ENCODE measurements at regions of chr12 and their contacts with region 1.

Region 1: GRCh38 chr12:67268896-67269631 is at the start of gene CAND1:
- DNase-seq: peak; percentile 99
- H3K4me3 ChIP-seq: peak within 1 kb of the TSS; percentile 65 to 98 (median 90)
- H3K27ac ChIP-seq: peak within 1 kb of the TSS; percentile 82
- H3K4me1 ChIP-seq: peaks cover 23% of the 10 kb centered on the region
- H3K27me3 ChIP-seq: no peaks in the 10 kb centered on the region
- CTCF ChIP-seq: no peak
- POLR2A ChIP-seq: peak; percentile 41
- total RNA-seq, gene CAND1: 124 and 128 TPM in 2 replicates

Region 2: DNA sequence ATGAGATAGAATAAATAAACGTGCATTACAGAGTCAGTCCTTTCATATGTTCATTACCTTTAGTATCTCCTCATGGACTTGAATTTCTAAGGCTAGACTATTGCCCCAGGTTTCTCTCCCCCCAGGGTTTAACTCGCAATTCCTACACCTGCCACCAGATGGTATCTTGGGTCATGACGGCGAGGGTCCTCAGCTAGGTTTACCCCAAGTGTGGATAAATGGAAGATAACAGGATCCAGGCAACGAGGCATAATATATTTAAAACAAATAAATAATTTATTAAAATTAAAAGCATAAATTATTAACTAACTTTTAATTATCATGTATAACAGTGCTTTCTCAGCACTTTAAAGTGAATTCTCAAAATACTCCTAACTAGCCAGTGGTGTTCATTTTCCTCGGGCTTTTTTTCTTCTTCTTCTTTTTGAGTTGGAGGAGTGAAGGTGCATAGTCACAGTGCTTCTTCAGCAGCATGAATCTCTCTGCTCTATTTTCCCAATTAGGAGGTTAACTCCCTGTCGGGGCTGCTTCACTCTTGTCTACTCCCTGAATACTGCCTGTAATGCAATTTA is 243.4 kb before region 1 on chr12:
- CTCF ChIA-PET with region 1: no interaction called
- POLR2A ChIA-PET with region 1: no interaction called
- dilution Hi-C with region 1: no loop called
- intact Hi-C with region 1: no loop called
- DNase-seq: peak; percentile 44
- H3K4me3 ChIP-seq: no peak overlapping the region
- H3K27ac ChIP-seq: no peak overlapping the region
- H3K4me1 ChIP-seq: no peaks in the 10 kb centered on the region
- H3K27me3 ChIP-seq: no peaks in the 10 kb centered on the region
- CTCF ChIP-seq: peak; percentile 54 to 60
- POLR2A ChIP-seq: no peak

Region 3: DNA sequence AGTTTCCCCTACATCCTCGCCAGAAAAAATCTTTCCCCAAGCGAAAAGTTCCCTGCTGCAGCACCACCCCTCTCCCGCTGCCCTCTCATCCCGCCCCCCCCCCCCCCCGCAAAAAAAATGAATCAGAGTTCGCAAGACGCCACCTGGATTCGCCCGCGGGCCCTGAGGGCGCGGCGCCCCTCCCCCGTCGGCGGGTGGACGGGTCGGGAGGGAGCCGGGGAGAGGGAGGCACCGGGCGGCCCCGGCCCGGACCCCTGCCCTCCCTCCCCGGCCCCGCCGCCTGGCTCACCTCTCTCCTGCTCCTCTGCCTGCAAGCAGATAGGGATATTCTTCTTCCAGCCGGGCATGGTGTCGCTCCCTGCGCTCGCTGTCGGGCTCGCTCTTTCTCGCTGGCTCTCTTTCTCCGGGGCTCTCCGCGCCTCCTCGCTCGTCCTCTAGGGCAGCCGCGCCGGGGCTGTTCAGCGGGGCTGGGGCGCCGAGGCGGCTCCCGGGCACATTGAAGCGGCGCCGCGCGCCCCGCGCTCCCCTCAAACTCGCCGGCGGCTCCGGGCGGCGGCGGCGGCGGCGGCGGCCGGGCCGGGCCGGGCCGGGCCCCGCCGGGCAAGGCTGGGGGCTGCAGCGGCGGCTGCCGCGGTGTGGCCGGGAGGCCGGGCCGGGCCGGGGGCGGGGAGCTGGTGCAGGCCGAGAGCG is 200.2 kb before region 1 on chr12:
- CTCF ChIA-PET with region 1: interaction called, 3 read pairs
- POLR2A ChIA-PET with region 1: no interaction called
- dilution Hi-C with region 1: no loop called
- intact Hi-C with region 1: loop called (anchors 5 kb)
- DNase-seq: peak; percentile 41
- H3K4me3 ChIP-seq: peak overlapping the region in 1 of 3 experiments; percentile 36
- H3K27ac ChIP-seq: no peak overlapping the region
- H3K4me1 ChIP-seq: peaks cover 2% of the 10 kb centered on the region
- H3K27me3 ChIP-seq: peaks cover 25 to 35% of the 10 kb centered on the region in 2 experiments
- CTCF ChIP-seq: no peak
- POLR2A ChIP-seq: no peak

Region 4: GRCh38 chr12:67193704-67194103 is 75.4 kb before region 1 on chr12:
- CTCF ChIA-PET with region 1: no interaction called
- POLR2A ChIA-PET with region 1: no interaction called
- dilution Hi-C with region 1: no loop called
- intact Hi-C with region 1: no loop called
- DNase-seq: peak; percentile 24
- H3K4me3 ChIP-seq: no peak overlapping the region
- H3K27ac ChIP-seq: no peak overlapping the region
- H3K4me1 ChIP-seq: no peaks in the 10 kb centered on the region
- H3K27me3 ChIP-seq: no peaks in the 10 kb centered on the region
- CTCF ChIP-seq: no peak
- POLR2A ChIP-seq: no peak

Region 5: DNA sequence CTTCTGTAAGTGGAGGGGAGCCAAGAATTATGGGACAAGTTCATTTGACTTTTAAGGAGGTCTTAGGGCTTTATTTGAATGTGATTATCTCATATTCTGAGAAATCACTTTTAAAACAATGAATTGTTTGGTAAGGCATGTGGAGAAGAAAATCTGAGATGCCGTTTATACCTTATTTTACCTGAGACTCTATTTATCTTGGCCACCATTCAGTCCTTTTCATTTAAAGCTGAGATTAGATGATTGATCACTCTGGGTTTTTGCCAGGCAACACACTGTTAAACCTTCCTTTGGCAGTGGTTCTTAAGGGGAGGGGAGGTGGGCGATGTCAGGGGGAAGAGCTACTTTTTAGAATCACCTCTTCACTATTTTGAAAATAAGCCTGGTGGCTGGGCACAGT is 11.5 kb after region 1 on chr12:
- CTCF ChIA-PET with region 1: interaction called, 10 read pairs
- POLR2A ChIA-PET with region 1: interaction called, 3 read pairs
- dilution Hi-C with region 1: no loop called
- intact Hi-C with region 1: no loop called
- DNase-seq: no peak
- H3K4me3 ChIP-seq: no peak overlapping the region
- H3K27ac ChIP-seq: no peak overlapping the region
- H3K4me1 ChIP-seq: no peaks in the 10 kb centered on the region
- H3K27me3 ChIP-seq: no peaks in the 10 kb centered on the region
- CTCF ChIP-seq: no peak
- POLR2A ChIP-seq: no peak

Region 6: DNA sequence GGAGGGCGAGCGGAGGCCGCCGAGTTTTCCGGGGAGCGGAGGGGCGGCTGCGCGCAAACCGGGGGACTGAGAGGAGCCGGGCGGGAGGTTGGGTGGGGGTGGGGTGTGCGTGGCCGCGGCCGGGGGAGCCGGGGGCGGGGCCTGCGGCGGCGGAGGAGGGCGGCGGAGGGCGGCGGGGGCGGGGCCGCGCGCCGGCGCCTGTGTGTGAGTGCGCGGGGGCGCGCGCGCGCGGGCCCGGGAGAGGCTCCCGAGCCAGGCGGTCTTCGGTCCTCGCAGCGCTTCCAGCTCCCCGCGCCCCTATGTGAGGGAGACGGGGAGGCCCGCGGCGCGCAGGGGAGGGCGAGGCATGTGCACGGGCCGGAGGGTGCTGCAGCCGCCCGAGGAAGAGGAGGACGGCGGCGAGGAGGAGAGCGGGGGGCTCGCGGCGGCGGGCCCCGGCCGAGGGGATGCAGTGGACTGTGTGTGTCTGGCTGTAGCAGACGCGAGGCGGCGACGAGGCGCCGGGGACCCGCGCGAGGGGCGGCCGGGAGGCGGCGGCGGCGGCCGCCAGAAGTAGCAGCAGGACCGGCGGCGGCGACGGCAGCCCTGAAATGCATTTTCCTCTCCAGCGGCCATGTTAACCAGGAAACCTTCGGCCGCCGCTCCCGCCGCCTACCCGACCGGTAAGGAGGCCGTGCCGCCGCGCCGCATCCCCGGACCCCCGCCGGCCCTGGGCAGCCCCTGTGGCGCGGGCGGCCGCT is 379.6 kb after region 1 on chr12 and contains the start of gene DYRK2:
- CTCF ChIA-PET with region 1: interaction called, 3 read pairs
- POLR2A ChIA-PET with region 1: no interaction called
- dilution Hi-C with region 1: no loop called
- intact Hi-C with region 1: loop called (anchors 1 kb)
- DNase-seq: peak; percentile 76
- H3K4me3 ChIP-seq: peak within 1 kb of the TSS; percentile 58 to 90 (median 82)
- H3K27ac ChIP-seq: peak within 1 kb of the TSS; percentile 58
- H3K4me1 ChIP-seq: peaks cover 11% of the 10 kb centered on the region
- H3K27me3 ChIP-seq: no peaks in the 10 kb centered on the region
- CTCF ChIP-seq: no peak
- POLR2A ChIP-seq: peak; percentile 77
- total RNA-seq, gene DYRK2: 11.0 and 13.7 TPM in 2 replicates

Region 7: GRCh38 chr12:68331869-68332727 is 1063.0 kb after region 1 on chr12 and contains the start of gene MDM1:
- CTCF ChIA-PET with region 1: no interaction called
- POLR2A ChIA-PET with region 1: no interaction called
- dilution Hi-C with region 1: no loop called
- intact Hi-C with region 1: loop called (anchors 2 kb)
- DNase-seq: peak; percentile 98
- H3K4me3 ChIP-seq: peak within 1 kb of the TSS; percentile 57 to 93 (median 87)
- H3K27ac ChIP-seq: peak within 1 kb of the TSS; percentile 19
- H3K4me1 ChIP-seq: peaks cover 13% of the 10 kb centered on the region
- H3K27me3 ChIP-seq: peaks cover 4 to 21% of the 10 kb centered on the region in 2 experiments
- CTCF ChIP-seq: no peak
- POLR2A ChIP-seq: peak; percentile 79
- total RNA-seq, gene MDM1: 12.5 and 14.4 TPM in 2 replicates